Spleen (tissue), 13 donors: ENCODE measurements at regions of chr7 and their contacts with region 1.

Region 1: DNA sequence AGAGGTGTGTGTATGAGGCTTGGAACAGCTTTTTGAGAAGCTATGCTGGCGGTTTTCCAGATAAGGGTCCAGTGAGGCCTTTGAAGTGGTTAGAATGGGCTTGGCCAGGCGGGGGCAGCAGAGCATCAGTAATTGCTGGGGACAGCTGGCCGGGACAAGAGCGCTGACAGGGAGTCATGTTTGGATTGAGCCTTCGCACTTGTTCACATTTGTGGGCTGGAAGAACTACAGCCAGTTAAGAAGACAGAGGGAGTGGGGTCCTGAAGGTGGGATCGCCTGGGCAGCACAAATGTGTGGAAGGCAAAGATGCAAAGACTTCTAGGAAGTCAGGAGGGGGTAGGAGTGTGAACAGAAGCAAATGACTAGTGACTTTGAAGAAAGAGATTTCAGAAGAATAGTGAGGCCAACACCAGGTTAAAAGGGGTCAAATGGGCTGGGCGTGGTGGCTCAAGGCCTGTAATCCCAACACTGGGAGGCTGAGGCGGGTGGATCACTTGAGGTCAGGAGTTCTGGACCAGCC is 12.7 kb upstream of the SDHAF3 start:
- DNase-seq: peak; percentile 93
- H3K4me3 ChIP-seq: no peak overlapping the region
- H3K27ac ChIP-seq: no peak overlapping the region
- H3K4me1 ChIP-seq: peaks cover 0 to 8% (median 4%) of the 10 kb centered on the region in 6 donors
- H3K27me3 ChIP-seq: no peaks in the 10 kb centered on the region
- CTCF ChIP-seq: peak; percentile 66 to 88 (median 84)
- POLR2A ChIP-seq: no peak

Region 2: GRCh38 chr7:97179454-97180104 is 74.8 kb after region 1 on chr7:
- intact Hi-C with region 1: loop called (anchors 5 kb)
- DNase-seq: no peak
- H3K4me3 ChIP-seq: no peak overlapping the region
- H3K27ac ChIP-seq: no peak overlapping the region
- H3K4me1 ChIP-seq: peaks cover 0 to 12% (median 5%) of the 10 kb centered on the region in 6 donors
- H3K27me3 ChIP-seq: no peaks in the 10 kb centered on the region
- CTCF ChIP-seq: peak in 10 of 11 experiments; percentile 18 to 85 (median 70)
- POLR2A ChIP-seq: no peak

Region 3: DNA sequence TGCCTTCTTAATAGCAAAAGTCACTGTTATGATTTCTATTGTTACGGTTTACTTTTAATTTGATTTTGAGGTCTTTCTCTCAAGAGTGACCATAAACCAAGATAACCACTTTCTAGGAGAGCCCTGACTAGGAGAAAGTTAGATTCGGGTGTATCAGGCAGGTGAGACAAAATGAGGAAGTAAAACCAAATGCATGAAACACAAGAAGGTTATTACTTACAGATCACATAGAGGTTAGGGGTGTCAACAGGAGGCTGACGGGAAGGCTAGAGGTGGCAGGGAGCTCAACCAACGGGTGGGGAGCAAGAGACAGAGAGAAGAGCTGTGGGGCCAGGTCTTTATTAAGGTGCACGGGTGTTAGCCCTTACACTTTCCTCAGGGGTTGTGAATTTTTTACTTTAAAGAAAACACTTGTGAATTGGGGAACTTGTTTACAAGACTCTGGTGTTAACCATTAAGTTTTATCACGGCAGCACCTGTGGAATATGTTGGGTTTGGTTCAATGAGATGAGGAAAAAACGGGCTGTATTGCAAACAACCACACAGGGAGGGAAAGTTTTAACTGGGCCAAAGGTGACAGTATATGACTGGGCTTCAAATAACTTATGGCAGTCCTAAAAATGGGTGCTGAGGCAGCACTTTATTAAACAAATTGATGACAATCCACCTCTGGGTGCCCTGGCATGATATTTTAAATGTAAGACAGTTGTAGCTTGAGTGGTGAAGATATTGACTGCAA is 167.6 kb after region 1 on chr7:
- intact Hi-C with region 1: no loop called
- DNase-seq: no peak
- H3K4me3 ChIP-seq: no peak overlapping the region
- H3K27ac ChIP-seq: no peak overlapping the region
- H3K4me1 ChIP-seq: no peaks in the 10 kb centered on the region
- H3K27me3 ChIP-seq: no peaks in the 10 kb centered on the region
- CTCF ChIP-seq: no peak
- POLR2A ChIP-seq: no peak

Region 4: GRCh38 chr7:97418312-97418711 is 313.5 kb after region 1 on chr7:
- intact Hi-C with region 1: no loop called
- DNase-seq: no peak
- H3K4me3 ChIP-seq: no peak overlapping the region
- H3K27ac ChIP-seq: no peak overlapping the region
- H3K4me1 ChIP-seq: no peaks in the 10 kb centered on the region
- H3K27me3 ChIP-seq: no peaks in the 10 kb centered on the region
- CTCF ChIP-seq: no peak
- POLR2A ChIP-seq: no peak

Region 5: GRCh38 chr7:97835296-97836138 is 730.7 kb after region 1 on chr7:
- intact Hi-C with region 1: loop called (anchors 5 kb)
- DNase-seq: no peak
- H3K4me3 ChIP-seq: no peak overlapping the region
- H3K27ac ChIP-seq: no peak overlapping the region
- H3K4me1 ChIP-seq: peaks cover 0 to 5% (median 0%) of the 10 kb centered on the region in 6 donors
- H3K27me3 ChIP-seq: peaks cover 0 to 15% (median 0%) of the 10 kb centered on the region in 7 donors
- CTCF ChIP-seq: peak; percentile 9 to 77 (median 47)
- POLR2A ChIP-seq: no peak